CD8-positive, alpha-beta T cell (primary cell): ENCODE measurements at regions of chr19 and their contacts with region 1.

Region 1: GRCh38 chr19:53867225-53868090 is at the start of gene MYADM:
- DNase-seq: peak; percentile 99 to 100 (median 100)
- ATAC-seq: peak; percentile 72
- H3K4me3 ChIP-seq: peak within 1 kb of the TSS; percentile 96 to 97
- H3K4me3 Mint-ChIP-seq: peak within 1 kb of the TSS; percentile 98
- H3K27ac ChIP-seq: peak within 1 kb of the TSS; percentile 98 to 99
- H3K27ac Mint-ChIP-seq: peak within 1 kb of the TSS; percentile 96
- H3K4me1 ChIP-seq: peaks cover 32% of the 10 kb centered on the region
- H3K4me1 Mint-ChIP-seq: peaks cover 39% of the 10 kb centered on the region
- H3K27me3 ChIP-seq: no peaks in the 10 kb centered on the region
- H3K27me3 Mint-ChIP-seq: no peaks in the 10 kb centered on the region
- CTCF ChIP-seq: no peak
- total RNA-seq, gene MYADM: 241 to 251 TPM

Region 2: DNA sequence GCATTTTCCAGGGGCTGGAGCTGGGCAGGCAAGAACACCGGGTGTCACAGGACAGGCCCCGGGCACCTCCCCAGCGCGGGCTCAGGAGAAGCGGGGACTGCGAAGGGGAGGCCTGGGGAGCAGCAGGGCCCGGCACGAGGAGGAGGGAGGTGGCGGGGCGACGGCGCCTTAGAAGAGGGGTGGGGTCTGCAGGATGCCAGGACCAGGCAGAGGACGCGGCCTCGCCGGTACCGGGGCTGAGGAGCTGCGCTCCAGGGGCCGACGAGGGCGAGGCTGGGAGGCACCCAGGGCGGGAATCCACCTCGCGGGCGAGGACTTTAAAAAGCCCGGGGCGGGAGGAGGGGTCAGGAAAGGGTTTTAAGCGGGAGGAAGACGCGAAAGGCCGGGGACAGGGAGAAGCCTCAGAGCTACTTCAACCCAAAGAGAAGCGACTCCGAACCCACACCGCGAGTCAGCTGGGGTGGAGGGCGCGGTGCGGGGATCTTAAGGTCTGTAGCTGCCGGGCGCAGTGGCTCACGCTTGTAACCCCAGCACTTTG is 709.3 kb before region 1 on chr19:
- CTCF ChIA-PET with region 1: no interaction called
- POLR2A ChIA-PET with region 1: no interaction called
- intact Hi-C with region 1: loop called in 1 of 2 experiments (anchors 5 kb)
- DNase-seq: peak in 7 of 9 experiments; percentile 4 to 63 (median 47)
- ATAC-seq: peak; percentile 42
- H3K4me3 ChIP-seq: peak overlapping the region; percentile 59 to 60
- H3K4me3 Mint-ChIP-seq: peak overlapping the region; percentile 77
- H3K27ac ChIP-seq: peak overlapping the region; percentile 44 to 52
- H3K27ac Mint-ChIP-seq: peak overlapping the region; percentile 79
- H3K4me1 ChIP-seq: peaks cover 13% of the 10 kb centered on the region
- H3K4me1 Mint-ChIP-seq: peaks cover 23% of the 10 kb centered on the region
- H3K27me3 ChIP-seq: no peaks in the 10 kb centered on the region
- H3K27me3 Mint-ChIP-seq: no peaks in the 10 kb centered on the region
- CTCF ChIP-seq: no peak

Region 3: DNA sequence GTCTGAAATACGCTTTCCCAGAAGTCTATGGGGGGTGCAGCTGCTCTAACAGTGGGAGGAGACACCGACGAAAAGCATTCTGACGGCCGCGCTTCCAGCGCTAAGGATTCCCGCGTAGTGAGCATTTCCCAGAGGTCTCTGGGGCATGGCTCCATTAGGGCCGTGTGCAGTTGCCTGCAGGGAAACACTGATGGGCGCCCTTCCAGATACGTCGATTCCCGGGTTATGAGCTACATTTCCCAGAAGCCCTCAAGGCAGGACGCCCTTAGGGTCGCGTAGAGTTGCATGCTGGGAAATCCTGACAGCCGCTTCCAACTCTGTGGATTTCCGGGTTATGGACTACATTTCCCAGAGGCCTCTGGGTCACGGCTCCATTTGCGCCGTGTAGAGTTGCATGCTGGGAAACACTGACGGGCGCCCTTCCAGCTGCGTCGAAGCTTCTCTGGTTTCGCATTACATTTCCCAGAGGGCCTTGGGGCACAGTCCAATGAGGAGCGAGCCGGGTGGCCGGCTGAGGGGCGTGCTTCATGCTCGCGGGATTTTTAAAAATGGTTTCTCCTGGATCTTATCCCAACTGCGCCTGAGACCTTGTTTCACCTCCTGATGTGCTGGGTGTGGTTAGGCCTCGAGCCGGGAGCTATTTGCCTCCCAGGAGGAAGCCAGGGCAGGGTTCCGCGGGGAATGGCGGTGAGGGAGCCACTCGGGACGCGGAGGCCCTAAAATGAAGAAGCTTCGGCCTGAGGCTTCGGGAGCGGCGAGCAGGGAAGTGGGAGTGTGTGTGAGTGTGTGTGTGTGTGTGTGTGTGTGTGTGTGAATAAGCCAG is 346.7 kb before region 1 on chr19:
- CTCF ChIA-PET with region 1: no interaction called
- POLR2A ChIA-PET with region 1: no interaction called
- intact Hi-C with region 1: loop called in 1 of 2 experiments (anchors 1 kb)
- DNase-seq: peak; percentile 77 to 97 (median 85)
- ATAC-seq: peak; percentile 99
- H3K4me3 ChIP-seq: peak overlapping the region; percentile 54 to 63
- H3K4me3 Mint-ChIP-seq: peak overlapping the region; percentile 94
- H3K27ac ChIP-seq: peak overlapping the region; percentile 26 to 78
- H3K27ac Mint-ChIP-seq: peak overlapping the region; percentile 92
- H3K4me1 ChIP-seq: peaks cover 12% of the 10 kb centered on the region
- H3K4me1 Mint-ChIP-seq: peaks cover 17% of the 10 kb centered on the region
- H3K27me3 ChIP-seq: no peaks in the 10 kb centered on the region
- H3K27me3 Mint-ChIP-seq: no peaks in the 10 kb centered on the region
- CTCF ChIP-seq: no peak

Region 4: DNA sequence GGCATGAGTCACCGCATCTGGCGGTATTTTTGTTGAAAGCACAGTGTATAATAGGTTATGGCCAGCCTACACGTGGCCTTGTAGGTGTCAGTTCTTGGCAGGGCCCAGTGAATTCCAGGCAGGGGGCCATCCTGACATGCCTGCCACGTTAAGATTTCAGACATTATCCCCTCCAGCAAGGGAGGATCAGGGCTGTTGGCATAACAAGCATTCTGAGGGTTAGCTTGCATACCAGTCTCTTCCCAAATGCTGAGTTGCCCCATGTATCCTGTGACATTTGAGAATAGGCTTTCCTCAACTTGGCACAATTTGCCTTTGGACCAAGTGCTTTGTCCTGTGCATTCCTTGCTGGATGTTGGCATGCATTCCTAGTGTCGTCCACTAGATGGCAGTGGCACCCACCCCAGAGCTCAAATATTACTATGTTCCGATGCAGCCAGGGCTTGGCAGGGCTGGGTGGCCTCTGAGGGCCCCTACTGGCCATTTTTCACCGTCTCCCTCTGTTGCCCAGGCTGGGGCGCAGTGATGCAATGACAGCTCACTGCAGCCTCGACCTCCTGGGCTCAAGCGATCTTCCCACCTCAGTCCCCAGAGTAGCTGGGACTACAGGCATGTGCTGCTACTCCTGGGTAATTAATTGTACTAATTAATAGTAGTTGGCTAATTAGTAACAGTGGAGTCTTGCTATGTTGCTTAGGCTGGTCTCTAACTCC is 74.6 kb before region 1 on chr19:
- CTCF ChIA-PET with region 1: no interaction called
- POLR2A ChIA-PET with region 1: no interaction called
- intact Hi-C with region 1: no loop called
- DNase-seq: peak; percentile 46 to 81 (median 68)
- ATAC-seq: peak; percentile 100
- H3K4me3 ChIP-seq: no peak overlapping the region
- H3K4me3 Mint-ChIP-seq: no peak overlapping the region
- H3K27ac ChIP-seq: no peak overlapping the region
- H3K27ac Mint-ChIP-seq: no peak overlapping the region
- H3K4me1 ChIP-seq: no peaks in the 10 kb centered on the region
- H3K4me1 Mint-ChIP-seq: no peaks in the 10 kb centered on the region
- H3K27me3 ChIP-seq: no peaks in the 10 kb centered on the region
- H3K27me3 Mint-ChIP-seq: peaks cover 2% of the 10 kb centered on the region
- CTCF ChIP-seq: peak; percentile 91

Region 5: GRCh38 chr19:53853707-53854106 is 13.8 kb before region 1 on chr19:
- CTCF ChIA-PET with region 1: interaction called, 9 read pairs
- POLR2A ChIA-PET with region 1: interaction called, 4 read pairs
- intact Hi-C with region 1: loop called in 1 of 2 experiments (anchors 1 kb)
- DNase-seq: no peak
- ATAC-seq: no peak
- H3K4me3 ChIP-seq: no peak overlapping the region
- H3K4me3 Mint-ChIP-seq: no peak overlapping the region
- H3K27ac ChIP-seq: no peak overlapping the region
- H3K27ac Mint-ChIP-seq: no peak overlapping the region
- H3K4me1 ChIP-seq: no peaks in the 10 kb centered on the region
- H3K4me1 Mint-ChIP-seq: peaks cover 6% of the 10 kb centered on the region
- H3K27me3 ChIP-seq: peaks cover 0 to 3% of the 10 kb centered on the region in 2 experiments
- H3K27me3 Mint-ChIP-seq: peaks cover 22% of the 10 kb centered on the region
- CTCF ChIP-seq: no peak

Region 6: GRCh38 chr19:54137086-54137921 is 269.8 kb after region 1 on chr19 and contains the start of gene CNOT3:
- CTCF ChIA-PET with region 1: no interaction called
- POLR2A ChIA-PET with region 1: no interaction called
- intact Hi-C with region 1: loop called in 1 of 2 experiments (anchors 1 kb)
- DNase-seq: peak; percentile 95 to 100 (median 99)
- ATAC-seq: peak; percentile 76
- H3K4me3 ChIP-seq: peak within 1 kb of the TSS; percentile 55 to 74
- H3K4me3 Mint-ChIP-seq: peak within 1 kb of the TSS; percentile 88
- H3K27ac ChIP-seq: peak within 1 kb of the TSS; percentile 85 to 97
- H3K27ac Mint-ChIP-seq: peak within 1 kb of the TSS; percentile 95
- H3K4me1 ChIP-seq: peaks cover 33% of the 10 kb centered on the region
- H3K4me1 Mint-ChIP-seq: peaks cover 50% of the 10 kb centered on the region
- H3K27me3 ChIP-seq: peaks cover 0 to 3% of the 10 kb centered on the region in 2 experiments
- H3K27me3 Mint-ChIP-seq: no peaks in the 10 kb centered on the region
- CTCF ChIP-seq: no peak
- total RNA-seq, gene CNOT3: 30.8 to 42.3 TPM

Region 7: GRCh38 chr19:54448774-54449700 is 581.6 kb after region 1 on chr19 and contains the start of gene LENG8:
- CTCF ChIA-PET with region 1: no interaction called
- POLR2A ChIA-PET with region 1: no interaction called
- intact Hi-C with region 1: loop called in 1 of 2 experiments (anchors 5 kb)
- DNase-seq: peak; percentile 94 to 100 (median 97)
- ATAC-seq: peak; percentile 89
- H3K4me3 ChIP-seq: peak within 1 kb of the TSS; percentile 66 to 67
- H3K4me3 Mint-ChIP-seq: peak within 1 kb of the TSS; percentile 99
- H3K27ac ChIP-seq: peak within 1 kb of the TSS; percentile 97 to 98
- H3K27ac Mint-ChIP-seq: peak within 1 kb of the TSS; percentile 99
- H3K4me1 ChIP-seq: peaks cover 39% of the 10 kb centered on the region
- H3K4me1 Mint-ChIP-seq: peaks cover 52% of the 10 kb centered on the region
- H3K27me3 ChIP-seq: no peaks in the 10 kb centered on the region
- H3K27me3 Mint-ChIP-seq: no peaks in the 10 kb centered on the region
- CTCF ChIP-seq: no peak
- total RNA-seq, gene LENG8: 514 to 558 TPM

Region 8: GRCh38 chr19:55339048-55339888 is 1471.8 kb after region 1 on chr19 and contains the start of gene KMT5C:
- CTCF ChIA-PET with region 1: no interaction called
- POLR2A ChIA-PET with region 1: no interaction called
- intact Hi-C with region 1: loop called in 1 of 2 experiments (anchors 2 kb)
- DNase-seq: peak; percentile 100
- ATAC-seq: peak; percentile 75
- H3K4me3 ChIP-seq: peak within 1 kb of the TSS; percentile 67 to 80
- H3K4me3 Mint-ChIP-seq: peak within 1 kb of the TSS; percentile 94
- H3K27ac ChIP-seq: peak within 1 kb of the TSS; percentile 94 to 100
- H3K27ac Mint-ChIP-seq: peak within 1 kb of the TSS; percentile 95
- H3K4me1 ChIP-seq: peaks cover 24% of the 10 kb centered on the region
- H3K4me1 Mint-ChIP-seq: peaks cover 20% of the 10 kb centered on the region
- H3K27me3 ChIP-seq: peaks cover 0 to 6% of the 10 kb centered on the region in 2 experiments
- H3K27me3 Mint-ChIP-seq: peaks cover 6% of the 10 kb centered on the region
- CTCF ChIP-seq: no peak
- total RNA-seq, gene KMT5C: 82.0 to 84.4 TPM